Cardiac septum (tissue), 1 donor: ENCODE measurements at regions of chr9 and their contacts with region 1.

Region 1: GRCh38 chr9:87684627-87685219 is 41.2 kb upstream of the CTSL start:
- DNase-seq: no peak

Region 2: GRCh38 chr9:87713278-87713987 is 28.7 kb after region 1 on chr9:
- intact Hi-C with region 1: no loop called
- DNase-seq: peak; percentile 88

Region 3: DNA sequence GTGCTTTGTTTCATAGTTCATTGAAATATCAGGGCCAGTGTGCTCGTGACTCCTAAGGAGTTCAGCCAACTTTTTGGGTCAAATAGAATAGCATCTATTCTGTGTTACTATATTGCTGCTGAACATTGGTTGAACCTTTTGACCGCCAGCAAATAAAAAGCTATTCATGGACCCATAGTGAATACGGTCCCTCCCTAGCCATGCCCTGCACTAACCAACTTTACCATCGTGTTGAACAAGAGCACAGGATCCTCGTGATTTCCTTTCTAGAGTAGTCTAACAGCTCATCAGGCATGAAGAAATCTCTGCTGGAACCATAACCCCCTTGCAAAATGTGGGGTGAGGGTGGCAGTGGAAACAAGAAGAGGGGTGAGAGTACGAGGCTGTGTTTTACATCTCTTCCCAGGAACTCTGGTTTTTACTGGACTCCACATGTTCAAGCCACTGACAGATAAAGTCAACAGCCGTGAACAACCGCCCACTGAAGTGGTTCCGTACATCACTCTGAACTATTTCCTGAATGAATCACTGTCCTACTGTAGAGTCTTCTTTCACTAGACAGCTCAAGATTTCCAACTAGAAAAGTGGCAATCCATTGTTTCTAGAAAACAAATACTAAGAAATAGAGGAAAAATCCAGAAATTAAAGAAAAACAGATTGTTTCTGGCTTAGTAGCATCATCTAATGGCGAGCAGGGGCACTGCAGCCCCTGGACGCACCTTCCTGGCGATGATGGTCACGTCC is 127.8 kb after region 1 on chr9:
- intact Hi-C with region 1: loop called (anchors 2 kb)
- DNase-seq: no peak

Region 4: DNA sequence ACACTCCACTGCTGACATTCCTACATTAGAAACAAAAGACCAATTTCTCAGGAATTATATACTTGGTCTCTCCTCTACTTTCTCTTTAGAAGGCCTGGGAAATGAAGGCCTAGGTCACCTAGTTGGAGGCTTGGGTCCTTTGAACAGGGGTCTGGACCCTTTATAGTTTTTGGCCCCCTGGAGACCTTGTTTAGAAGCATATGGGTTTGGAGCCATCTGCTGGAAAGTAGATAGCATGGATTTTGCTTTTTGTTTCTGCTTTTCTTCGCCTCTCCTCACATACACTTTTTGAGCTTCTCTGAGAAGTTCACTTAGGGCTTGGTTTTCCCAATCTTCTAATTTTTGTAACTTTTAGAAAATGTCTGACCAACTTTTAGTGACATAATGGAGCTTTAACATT is 356.7 kb after region 1 on chr9:
- intact Hi-C with region 1: loop called (anchors 10 kb)
- DNase-seq: no peak